PC-9 (cell line): ENCODE measurements at regions of chr10 and their contacts with region 1.

Region 1: DNA sequence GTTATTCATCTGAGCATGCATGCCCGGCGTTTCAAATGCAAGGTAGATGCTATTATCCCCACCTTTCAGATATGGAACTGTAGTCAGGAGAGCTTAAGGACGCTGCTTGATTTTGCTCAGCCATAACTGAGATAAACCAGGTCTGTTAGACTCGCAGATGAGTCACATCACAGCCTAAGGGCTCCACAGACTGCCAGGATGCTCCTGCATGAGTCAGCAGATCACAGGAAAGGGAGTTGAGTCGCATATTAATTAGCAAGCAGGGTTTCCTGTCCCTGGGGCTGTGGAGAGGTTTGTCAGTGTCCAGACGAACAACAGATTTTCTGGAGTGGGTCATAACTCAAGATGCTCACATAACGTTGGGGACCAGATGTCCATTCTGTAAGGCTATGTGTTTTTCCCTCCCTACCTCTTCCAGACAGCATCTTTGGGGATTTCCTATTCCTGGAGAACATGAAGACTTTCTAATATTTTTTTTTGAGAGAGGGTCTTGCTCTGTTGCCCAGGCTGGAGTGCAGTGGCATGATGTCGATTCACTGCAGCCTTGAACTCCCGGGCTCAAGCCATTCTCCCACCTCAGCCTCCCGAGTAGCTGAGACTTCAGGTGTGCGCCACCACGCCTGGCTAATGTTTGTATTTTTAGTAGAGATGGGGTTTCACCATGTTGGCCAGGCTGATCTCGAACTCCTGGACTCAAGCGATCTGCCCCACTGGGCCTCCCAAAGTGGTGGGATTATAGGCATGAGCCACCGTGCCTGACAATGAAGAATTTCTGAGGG is 36.7 kb downstream of the PFKFB3 start:
- DNase-seq: peak; percentile 84 to 94
- H3K4me3 ChIP-seq: no peak overlapping the region
- H3K27ac ChIP-seq: peak overlapping the region; percentile 60
- H3K4me1 ChIP-seq: peaks cover 9% of the 10 kb centered on the region
- H3K27me3 ChIP-seq: no peaks in the 10 kb centered on the region
- CTCF ChIP-seq: no peak

Region 2: GRCh38 chr10:6275022-6275997 is 35.9 kb after region 1 on chr10:
- CTCF ChIA-PET with region 1: no interaction called
- POLR2A ChIA-PET with region 1: interaction called, 4 read pairs
- intact Hi-C with region 1: loop called (anchors 2 kb)
- DNase-seq: peak; percentile 94 to 97
- H3K4me3 ChIP-seq: peak overlapping the region; percentile 54
- H3K27ac ChIP-seq: peak overlapping the region; percentile 89
- H3K4me1 ChIP-seq: peaks cover 36% of the 10 kb centered on the region
- H3K27me3 ChIP-seq: no peaks in the 10 kb centered on the region
- CTCF ChIP-seq: no peak

Region 3: GRCh38 chr10:6458814-6459213 is 219.4 kb after region 1 on chr10:
- CTCF ChIA-PET with region 1: no interaction called
- POLR2A ChIA-PET with region 1: no interaction called
- intact Hi-C with region 1: no loop called
- DNase-seq: no peak
- H3K4me3 ChIP-seq: no peak overlapping the region
- H3K27ac ChIP-seq: no peak overlapping the region
- H3K4me1 ChIP-seq: no peaks in the 10 kb centered on the region
- H3K27me3 ChIP-seq: no peaks in the 10 kb centered on the region
- CTCF ChIP-seq: no peak